Tibial artery (tissue), 4 donors: ENCODE measurements at regions of chr13 and their contacts with region 1.

Region 1: DNA sequence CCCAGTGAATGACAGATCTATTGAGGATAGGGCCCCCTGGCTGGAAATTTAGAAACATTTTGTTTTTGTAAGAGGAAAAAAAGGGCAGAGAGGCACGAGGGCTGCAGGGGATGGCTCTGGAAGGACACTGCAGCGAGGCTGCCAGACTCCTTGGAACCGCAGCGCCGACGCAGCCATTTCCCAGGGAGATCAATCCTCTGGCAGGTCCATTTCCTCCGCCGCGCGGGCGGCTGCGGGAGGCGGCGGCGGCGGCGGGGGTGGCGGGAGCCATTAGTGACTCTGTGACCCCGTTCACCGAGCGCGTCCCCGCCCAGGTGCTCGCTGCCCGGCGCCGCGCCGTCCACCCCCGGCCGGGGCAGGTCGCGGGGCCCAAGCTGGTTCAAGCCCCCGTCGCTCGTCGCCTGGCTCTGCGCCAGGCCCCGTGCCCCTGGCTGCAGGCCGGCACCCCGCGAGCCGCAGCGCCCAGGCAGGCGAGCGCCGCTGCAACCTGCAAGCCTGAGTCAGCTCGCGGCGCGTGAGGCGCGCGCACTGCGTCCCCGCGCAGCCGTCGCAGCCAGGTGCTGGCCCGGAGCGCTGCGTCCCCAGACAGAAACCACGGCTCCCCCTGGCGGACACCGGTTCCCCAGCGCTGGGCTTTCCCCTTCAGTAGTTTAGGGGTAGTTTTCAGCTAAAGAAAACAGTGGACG is 192.6 kb downstream of the KATNAL1 start:
- DNase-seq: peak; percentile 88 to 92
- H3K4me3 ChIP-seq: peak overlapping the region; percentile 57 to 78
- H3K27ac ChIP-seq: peak overlapping the region; percentile 72 to 73
- H3K4me1 ChIP-seq: peaks cover 0 to 43% (median 28%) of the 10 kb centered on the region in 4 donors
- H3K27me3 ChIP-seq: no peaks in the 10 kb centered on the region
- CTCF ChIP-seq: peak; percentile 87 to 92

Region 2: DNA sequence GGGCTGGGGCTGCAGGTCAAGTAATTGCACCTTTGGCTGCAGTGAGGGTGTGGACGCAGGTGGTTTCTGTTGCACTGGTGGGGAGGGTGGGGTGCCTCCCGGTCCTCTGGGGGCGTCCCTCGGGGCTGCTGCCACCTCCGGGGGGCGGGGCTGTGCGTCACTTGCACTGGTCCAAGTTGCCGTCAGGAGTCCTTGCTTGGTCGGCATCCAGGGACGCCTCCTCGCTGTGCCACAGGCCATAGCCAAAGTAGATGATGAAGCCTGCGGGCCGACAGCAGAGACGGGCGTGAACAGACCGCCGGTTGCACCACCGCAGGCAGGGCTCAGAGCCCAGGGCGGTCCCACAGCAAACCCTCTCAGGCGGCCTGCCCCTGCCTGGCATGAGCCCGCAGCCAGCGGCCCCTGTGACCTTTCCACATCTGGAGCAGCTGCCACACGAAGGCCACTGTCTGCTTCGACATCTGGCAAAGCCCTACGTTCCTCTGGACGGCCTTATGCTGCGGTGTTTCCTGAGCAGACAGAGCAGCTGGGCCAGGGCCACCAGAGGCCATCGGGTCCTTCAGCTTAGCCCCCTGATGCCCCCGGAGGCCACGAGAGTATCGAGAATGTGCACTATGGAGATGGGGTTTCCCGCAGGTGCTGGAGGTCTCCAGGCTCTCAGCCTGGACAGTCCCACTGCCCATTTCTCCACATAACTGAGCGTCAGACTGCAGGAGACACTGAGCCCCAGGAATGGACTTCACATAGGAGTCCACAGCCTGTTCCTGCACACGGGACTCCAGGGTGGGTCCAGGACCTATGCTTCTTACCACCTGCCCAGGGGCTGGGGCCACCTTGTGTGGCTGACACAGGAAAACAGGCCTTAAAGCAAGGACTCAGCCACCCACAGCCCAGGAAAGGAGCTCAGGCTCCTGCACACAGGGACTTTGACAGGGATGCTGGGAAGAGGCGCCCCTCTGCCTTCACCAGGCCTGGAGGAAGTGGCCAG is 600.1 kb before region 1 on chr13:
- intact Hi-C with region 1: loop called (anchors 5 kb)
- DNase-seq: no peak
- H3K4me3 ChIP-seq: no peak overlapping the region
- H3K27ac ChIP-seq: no peak overlapping the region
- H3K4me1 ChIP-seq: no peaks in the 10 kb centered on the region
- H3K27me3 ChIP-seq: no peaks in the 10 kb centered on the region
- CTCF ChIP-seq: no peak

Region 3: GRCh38 chr13:29771247-29771646 is 343.5 kb before region 1 on chr13:
- intact Hi-C with region 1: loop called (anchors 5 kb)
- DNase-seq: no peak
- H3K4me3 ChIP-seq: no peak overlapping the region
- H3K27ac ChIP-seq: no peak overlapping the region
- H3K4me1 ChIP-seq: no peaks in the 10 kb centered on the region
- H3K27me3 ChIP-seq: no peaks in the 10 kb centered on the region
- CTCF ChIP-seq: peak; percentile 48 to 49

Region 4: GRCh38 chr13:29850224-29850898 is 264.4 kb before region 1 on chr13 and contains the start of gene UBL3:
- intact Hi-C with region 1: loop called (anchors 2 kb)
- DNase-seq: peak; percentile 96 to 98
- H3K4me3 ChIP-seq: peak within 1 kb of the TSS; percentile 76 to 81
- H3K27ac ChIP-seq: peak within 1 kb of the TSS; percentile 98 to 99
- H3K4me1 ChIP-seq: peaks cover 0 to 27% (median 6%) of the 10 kb centered on the region in 4 donors
- H3K27me3 ChIP-seq: no peaks in the 10 kb centered on the region
- CTCF ChIP-seq: no peak

Region 5: GRCh38 chr13:29923554-29924481 is 190.9 kb before region 1 on chr13:
- intact Hi-C with region 1: loop called (anchors 10 kb)
- DNase-seq: peak; percentile 89 to 94
- H3K4me3 ChIP-seq: no peak overlapping the region
- H3K27ac ChIP-seq: peak overlapping the region; percentile 78 to 86
- H3K4me1 ChIP-seq: peaks cover 0 to 41% (median 37%) of the 10 kb centered on the region in 4 donors
- H3K27me3 ChIP-seq: no peaks in the 10 kb centered on the region
- CTCF ChIP-seq: peak; percentile 77 to 86